Common myeloid progenitor, CD34-positive (primary cell): ENCODE measurements at regions of chr1 and their contacts with region 1.

Region 1: GRCh38 chr1:8962812-8963530 is 17.3 kb downstream of the CA6 start:
- DNase-seq: peak; percentile 58 to 66 (median 61)
- H3K4me3 ChIP-seq: no peak overlapping the region
- H3K27ac ChIP-seq: no peak overlapping the region
- H3K4me1 ChIP-seq: peaks cover 0 to 9% (median 6%) of the 10 kb centered on the region in 4 experiments
- H3K27me3 ChIP-seq: no peaks in the 10 kb centered on the region

Region 2: GRCh38 chr1:8142955-8143629 is 819.9 kb before region 1 on chr1:
- CTCF ChIA-PET with region 1: no interaction called
- POLR2A ChIA-PET with region 1: no interaction called
- DNase-seq: no peak
- H3K4me3 ChIP-seq: no peak overlapping the region
- H3K27ac ChIP-seq: no peak overlapping the region
- H3K4me1 ChIP-seq: peaks cover 0 to 5% (median 1%) of the 10 kb centered on the region in 4 experiments
- H3K27me3 ChIP-seq: peaks cover 0 to 13% (median 6%) of the 10 kb centered on the region in 5 experiments

Region 3: DNA sequence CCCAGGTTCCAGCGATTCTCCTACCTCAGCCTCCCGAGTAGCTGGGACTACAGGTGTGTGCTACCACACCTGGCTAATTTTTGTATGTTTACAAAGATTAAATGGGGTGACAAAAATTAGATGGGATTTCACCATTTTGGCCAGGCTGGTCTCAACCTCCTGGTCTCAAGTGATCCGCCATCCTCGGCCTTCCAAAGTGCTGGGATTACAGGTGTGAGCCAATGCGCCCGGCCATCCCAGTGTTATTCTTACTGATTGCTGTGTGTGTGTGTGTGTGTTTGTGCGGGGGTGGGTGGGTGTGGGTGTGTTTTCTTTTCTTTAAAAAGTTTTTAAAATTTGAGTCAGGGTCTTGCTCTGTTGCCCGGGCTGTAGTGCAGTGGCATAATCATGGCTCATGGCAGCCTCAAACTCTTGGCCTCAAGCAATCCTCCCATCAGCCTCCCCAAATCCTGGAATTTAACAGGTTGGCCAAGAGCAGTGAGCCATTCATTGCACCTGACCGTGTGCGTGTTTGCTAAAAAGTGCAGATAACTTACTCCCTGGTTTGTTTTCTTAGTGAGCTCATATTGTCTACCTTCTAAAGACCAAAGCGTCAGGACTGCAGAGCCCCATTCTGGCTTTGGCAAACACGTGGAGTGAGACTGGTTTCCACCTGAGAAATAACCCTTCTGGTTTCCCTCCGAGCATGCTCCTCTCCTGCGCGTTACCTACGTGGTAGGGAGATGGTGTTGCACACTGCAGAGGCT is 49.7 kb before region 1 on chr1:
- CTCF ChIA-PET with region 1: interaction called, 16 read pairs
- POLR2A ChIA-PET with region 1: no interaction called
- DNase-seq: no peak
- H3K4me3 ChIP-seq: no peak overlapping the region
- H3K27ac ChIP-seq: no peak overlapping the region
- H3K4me1 ChIP-seq: peaks cover 0 to 1% (median under 1%) of the 10 kb centered on the region in 4 experiments
- H3K27me3 ChIP-seq: no peaks in the 10 kb centered on the region

Region 4: DNA sequence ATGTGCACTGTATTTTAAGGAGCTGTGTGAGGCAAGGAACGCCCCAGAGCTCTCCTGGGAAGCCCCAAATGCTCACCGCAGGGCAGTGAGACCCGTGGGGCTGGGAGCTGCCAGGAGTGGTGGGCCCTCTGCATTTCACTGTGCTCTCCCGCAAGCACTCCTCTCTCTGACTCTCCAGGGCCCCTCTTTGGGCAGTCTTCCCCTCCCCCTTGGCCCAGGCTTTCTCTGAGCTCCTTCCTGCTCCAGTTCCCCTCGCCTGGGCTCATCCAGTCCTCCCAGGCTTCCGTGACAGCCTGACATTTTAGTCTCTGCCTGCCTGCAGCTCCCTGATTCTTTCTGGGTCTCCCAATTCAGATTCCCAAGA is 19.5 kb before region 1 on chr1:
- CTCF ChIA-PET with region 1: interaction called, 10 read pairs
- POLR2A ChIA-PET with region 1: interaction called, 3 read pairs
- DNase-seq: peak in 1 of 3 donors; percentile 15
- H3K4me3 ChIP-seq: peak overlapping the region in 1 of 7 experiments; percentile 10
- H3K27ac ChIP-seq: no peak overlapping the region
- H3K4me1 ChIP-seq: peaks cover 1 to 63% (median 48%) of the 10 kb centered on the region in 4 experiments
- H3K27me3 ChIP-seq: no peaks in the 10 kb centered on the region

Region 5: DNA sequence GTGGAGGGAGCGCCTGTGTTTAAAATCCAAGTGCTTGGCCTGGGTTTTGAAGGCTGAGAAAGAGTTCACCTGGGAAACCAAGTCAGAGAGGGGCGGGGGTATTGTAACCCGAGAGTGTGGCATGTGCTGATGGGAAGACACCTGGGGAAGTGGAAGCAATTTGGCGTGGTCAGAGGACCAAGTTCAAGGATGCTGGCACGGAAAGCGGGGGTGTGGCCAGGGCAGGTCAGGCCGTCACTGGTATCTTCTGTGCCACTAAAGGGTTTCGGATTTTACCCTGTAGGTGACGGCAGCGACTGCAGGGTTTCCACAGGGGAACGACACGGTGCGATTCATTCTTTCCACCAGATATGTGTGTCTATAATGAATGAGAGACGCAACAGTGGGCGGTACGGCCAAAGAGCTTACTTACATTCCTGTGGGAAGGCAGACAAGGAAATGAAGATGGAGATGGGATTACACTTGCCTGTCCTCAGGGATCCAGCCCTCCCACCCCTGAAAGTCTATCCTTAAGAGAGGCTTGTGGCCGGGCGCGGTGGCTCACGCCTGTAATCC is 14.0 kb after region 1 on chr1:
- CTCF ChIA-PET with region 1: interaction called, 14 read pairs
- POLR2A ChIA-PET with region 1: no interaction called
- DNase-seq: no peak
- H3K4me3 ChIP-seq: no peak overlapping the region
- H3K27ac ChIP-seq: no peak overlapping the region
- H3K4me1 ChIP-seq: peaks cover 0 to 1% (median 0%) of the 10 kb centered on the region in 4 experiments
- H3K27me3 ChIP-seq: no peaks in the 10 kb centered on the region